Gastrocnemius medialis (tissue), 4 donors: ENCODE measurements at regions of chr2 and their contacts with region 1.

Region 1: GRCh38 chr2:226799181-226799975 is at the start of gene IRS1:
- DNase-seq: peak; percentile 45 to 49
- ATAC-seq: peak; percentile 11 to 24
- H3K4me3 ChIP-seq: peak within 1 kb of the TSS; percentile 79 to 95 (median 88)
- H3K27ac ChIP-seq: peak within 1 kb of the TSS; percentile 95 to 99 (median 98)
- H3K4me1 ChIP-seq: peaks cover 38 to 44% of the 10 kb centered on the region in 2 donors
- H3K27me3 ChIP-seq: no peaks in the 10 kb centered on the region
- CTCF ChIP-seq: peak in 2 of 5 experiments; percentile 42 to 73
- POLR2A ChIP-seq: peak; percentile 21 to 40
- total RNA-seq, gene IRS1: 2.2 to 71.1 (median 6.3) TPM

Region 2: GRCh38 chr2:225889446-225889850 is 909.9 kb before region 1 on chr2:
- in situ Hi-C with region 1: loop called (anchors 5 to 10 kb)
- intact Hi-C with region 1: loop called (anchors 2 kb)
- DNase-seq: peak in 1 of 2 donors; percentile 3
- ATAC-seq: peak; percentile 80 to 83
- H3K4me3 ChIP-seq: no peak overlapping the region
- H3K27ac ChIP-seq: no peak overlapping the region
- H3K4me1 ChIP-seq: peaks cover 0 to 4% of the 10 kb centered on the region in 2 donors
- H3K27me3 ChIP-seq: no peaks in the 10 kb centered on the region
- CTCF ChIP-seq: peak; percentile 62 to 92 (median 76)
- POLR2A ChIP-seq: no peak

Region 3: GRCh38 chr2:226137201-226137811 is 662.1 kb before region 1 on chr2:
- in situ Hi-C with region 1: loop called in 1 of 4 experiments (anchors 10 kb)
- intact Hi-C with region 1: loop called (anchors 10 kb)
- DNase-seq: no peak
- ATAC-seq: no peak
- H3K4me3 ChIP-seq: no peak overlapping the region
- H3K27ac ChIP-seq: peak overlapping the region in 1 of 4 donors; percentile 13
- H3K4me1 ChIP-seq: peaks cover 12 to 20% of the 10 kb centered on the region in 2 donors
- H3K27me3 ChIP-seq: no peaks in the 10 kb centered on the region
- CTCF ChIP-seq: no peak
- POLR2A ChIP-seq: no peak

Region 4: DNA sequence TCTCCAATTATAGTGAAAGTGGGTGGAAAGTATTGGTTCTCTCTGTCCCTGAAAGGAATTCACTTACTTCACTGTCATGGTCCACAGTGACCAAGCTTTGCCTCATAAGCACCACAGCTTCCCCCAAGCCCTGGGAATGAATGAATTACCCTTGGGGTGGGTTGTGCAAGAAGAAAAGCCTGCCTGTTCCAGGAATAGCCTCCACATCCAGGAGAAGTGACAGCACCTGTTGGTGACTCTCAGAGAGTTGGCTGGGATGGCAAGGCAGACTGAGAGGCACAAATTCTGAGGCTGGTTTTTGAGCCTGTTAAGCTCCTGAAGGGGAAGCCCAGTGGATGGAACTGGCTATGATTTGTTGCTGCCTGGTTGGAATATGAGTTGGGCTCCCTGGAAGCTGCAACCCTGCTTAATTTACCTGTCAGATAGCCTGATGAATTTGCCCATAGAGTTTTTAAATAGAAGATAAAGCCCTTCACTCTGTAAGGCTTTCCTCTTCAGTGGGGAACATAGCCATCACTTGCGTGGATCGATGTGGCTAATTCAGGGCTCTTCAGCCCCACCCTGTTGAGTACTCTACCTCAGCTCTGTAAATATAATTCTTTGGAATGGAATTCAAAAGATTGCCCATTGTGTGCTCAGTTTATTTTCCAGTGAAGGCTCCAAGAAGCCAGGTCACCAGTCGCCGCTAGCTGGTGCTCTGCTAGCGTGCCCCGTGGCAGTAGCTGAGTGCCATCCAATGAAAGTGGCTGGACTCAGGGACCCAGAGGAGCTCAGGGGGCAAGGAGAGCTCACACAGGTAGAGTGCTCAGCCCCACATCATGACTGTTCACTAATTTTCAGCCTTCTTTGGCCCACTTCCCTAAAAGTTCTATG is 479.1 kb before region 1 on chr2:
- in situ Hi-C with region 1: loop called in 2 of 4 experiments (anchors 10 to 25 kb)
- intact Hi-C with region 1: loop called (anchors 2 kb)
- DNase-seq: peak; percentile 69 to 85
- ATAC-seq: peak; percentile 98 to 99
- H3K4me3 ChIP-seq: peak overlapping the region in 3 of 4 donors; percentile 27 to 43 (median 29)
- H3K27ac ChIP-seq: peak overlapping the region; percentile 81 to 91 (median 86)
- H3K4me1 ChIP-seq: peaks cover 21 to 26% of the 10 kb centered on the region in 2 donors
- H3K27me3 ChIP-seq: no peaks in the 10 kb centered on the region
- CTCF ChIP-seq: peak in 4 of 5 experiments; percentile 20 to 64 (median 42)
- POLR2A ChIP-seq: no peak

Region 5: DNA sequence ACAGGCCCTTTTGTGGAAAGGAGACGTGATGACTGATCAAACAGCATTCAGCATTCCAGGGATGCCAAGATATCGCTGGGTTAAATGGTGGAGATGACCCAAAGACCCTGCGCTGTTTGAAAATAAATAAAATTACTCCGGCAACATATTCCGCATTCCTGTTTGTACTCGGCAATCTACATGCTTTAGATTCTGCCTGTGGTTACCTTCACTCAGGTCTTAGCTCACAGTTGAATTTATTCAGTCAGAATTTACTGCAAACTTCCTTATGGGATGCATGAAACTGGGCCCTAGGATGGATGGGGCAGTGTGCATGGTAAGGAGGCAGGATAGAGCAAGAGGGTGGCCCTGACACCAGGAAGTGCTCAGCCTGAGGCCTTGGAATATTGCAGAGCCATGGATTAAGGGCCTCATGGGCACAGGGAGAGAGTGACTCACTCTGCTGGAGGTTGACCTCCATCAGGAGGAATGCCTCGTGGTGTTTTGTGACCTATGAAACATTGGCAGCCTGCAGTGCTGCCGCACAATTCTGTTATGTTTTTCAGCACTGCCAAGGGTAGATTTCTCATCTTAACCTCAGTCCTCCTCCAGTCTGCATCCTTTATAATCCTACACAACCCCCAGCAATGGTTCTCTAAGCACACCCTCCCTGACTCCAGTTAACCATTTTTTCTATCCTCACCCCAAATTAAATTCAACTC is 321.1 kb before region 1 on chr2:
- in situ Hi-C with region 1: no loop called
- intact Hi-C with region 1: loop called (anchors 1 kb)
- DNase-seq: peak; percentile 71 to 77
- ATAC-seq: peak; percentile 97 to 100
- H3K4me3 ChIP-seq: no peak overlapping the region
- H3K27ac ChIP-seq: peak overlapping the region; percentile 61 to 78 (median 66)
- H3K4me1 ChIP-seq: peaks cover 16 to 20% of the 10 kb centered on the region in 2 donors
- H3K27me3 ChIP-seq: no peaks in the 10 kb centered on the region
- CTCF ChIP-seq: no peak
- POLR2A ChIP-seq: no peak

Region 6: GRCh38 chr2:226906163-226906693 is 106.8 kb after region 1 on chr2:
- in situ Hi-C with region 1: no loop called
- intact Hi-C with region 1: no loop called
- DNase-seq: no peak
- ATAC-seq: no peak
- H3K4me3 ChIP-seq: no peak overlapping the region
- H3K27ac ChIP-seq: no peak overlapping the region
- H3K4me1 ChIP-seq: no peaks in the 10 kb centered on the region
- H3K27me3 ChIP-seq: no peaks in the 10 kb centered on the region
- CTCF ChIP-seq: no peak
- POLR2A ChIP-seq: no peak